Natural killer cell (primary cell): ENCODE measurements at regions of chr1 and their contacts with region 1.

Region 1: DNA sequence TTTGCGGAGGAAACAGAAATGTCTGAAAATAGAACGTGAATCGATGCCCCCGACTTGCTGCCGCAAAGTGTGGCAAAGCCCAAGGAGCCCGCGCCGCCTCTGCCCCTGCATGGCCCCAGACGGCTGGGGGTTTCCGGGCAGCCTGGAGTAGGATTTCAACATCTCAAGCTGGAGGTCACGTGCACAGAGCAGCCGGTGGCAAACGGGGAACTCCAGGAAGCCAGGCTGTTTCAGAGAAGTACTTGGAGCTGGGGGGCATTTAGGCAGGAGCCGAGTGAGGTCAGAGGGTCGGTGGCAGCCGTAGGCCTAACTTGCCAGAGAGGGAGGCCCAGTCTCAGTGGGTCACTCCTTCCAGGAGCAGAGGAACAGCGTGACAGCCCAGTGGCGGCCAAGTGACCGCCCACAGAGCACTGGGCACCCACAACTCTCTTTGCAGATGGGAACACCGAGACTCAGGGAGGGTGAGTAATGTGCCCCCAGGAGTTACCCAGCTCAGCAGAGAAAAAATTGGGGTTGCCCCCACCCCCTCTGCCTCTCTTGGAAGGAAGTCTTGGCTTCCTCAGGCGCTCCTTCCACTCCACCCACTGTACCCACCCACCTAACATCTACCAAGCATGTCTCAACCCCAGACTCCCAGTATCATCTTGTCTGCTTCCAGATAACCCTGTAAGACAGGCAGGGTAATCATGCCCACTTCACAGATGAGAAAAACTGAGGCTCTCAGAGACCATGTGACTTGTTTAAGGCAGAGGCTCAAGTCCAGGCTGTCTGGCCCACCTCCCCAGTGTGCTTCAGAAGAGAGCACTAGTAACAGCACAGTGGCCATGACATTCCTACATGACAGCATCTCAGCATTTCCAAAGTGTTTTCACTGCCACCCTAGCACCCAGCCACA is 179.4 kb downstream of the HIVEP3 start:
- DNase-seq: peak; percentile 79 to 90
- ATAC-seq: peak; percentile 83 to 92 (median 89)
- H3K4me3 ChIP-seq: peak overlapping the region; percentile 2
- H3K4me3 Mint-ChIP-seq: peak overlapping the region; percentile 78
- H3K27ac ChIP-seq: peak overlapping the region; percentile 65
- H3K27ac Mint-ChIP-seq: peak overlapping the region; percentile 92 to 97
- H3K4me1 ChIP-seq: peaks cover 47% of the 10 kb centered on the region
- H3K4me1 Mint-ChIP-seq: peaks cover 54 to 75% of the 10 kb centered on the region in 2 donors
- H3K27me3 ChIP-seq: no peaks in the 10 kb centered on the region
- H3K27me3 Mint-ChIP-seq: no peaks in the 10 kb centered on the region
- CTCF ChIP-seq: no peak

Region 2: DNA sequence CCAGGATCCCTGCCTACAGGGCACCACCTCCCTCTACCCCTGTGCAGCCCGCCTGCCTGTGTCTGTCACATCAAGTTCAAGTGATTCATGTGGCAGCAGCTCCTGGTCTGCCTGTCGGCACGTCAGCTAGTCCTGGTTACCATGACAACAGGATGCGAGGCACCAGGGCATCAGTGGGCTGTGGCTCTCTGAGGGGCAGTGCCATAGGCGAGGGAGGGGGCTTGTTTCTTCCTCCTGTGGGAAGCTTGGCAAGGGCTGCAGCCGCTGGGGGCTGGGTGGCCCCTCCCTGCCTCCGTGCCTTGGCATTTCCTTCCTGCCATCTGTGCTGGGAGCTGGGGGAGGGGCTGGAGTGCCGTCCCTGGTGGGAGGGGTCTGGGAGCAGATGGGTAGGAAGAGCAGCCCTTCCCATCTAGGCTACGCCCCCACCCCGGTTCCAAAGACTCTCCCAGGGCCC is 335.0 kb before region 1 on chr1:
- intact Hi-C with region 1: loop called (anchors 5 kb)
- DNase-seq: peak in 1 of 2 donors; percentile 39
- ATAC-seq: peak; percentile 55 to 88 (median 85)
- H3K4me3 ChIP-seq: no peak overlapping the region
- H3K4me3 Mint-ChIP-seq: no peak overlapping the region
- H3K27ac ChIP-seq: no peak overlapping the region
- H3K27ac Mint-ChIP-seq: peak overlapping the region in 1 of 2 donors; percentile 74
- H3K4me1 ChIP-seq: peaks cover 7% of the 10 kb centered on the region
- H3K4me1 Mint-ChIP-seq: no peaks in the 10 kb centered on the region
- H3K27me3 ChIP-seq: peaks cover 10% of the 10 kb centered on the region
- H3K27me3 Mint-ChIP-seq: peaks cover 23 to 29% of the 10 kb centered on the region in 2 donors
- CTCF ChIP-seq: no peak

Region 3: DNA sequence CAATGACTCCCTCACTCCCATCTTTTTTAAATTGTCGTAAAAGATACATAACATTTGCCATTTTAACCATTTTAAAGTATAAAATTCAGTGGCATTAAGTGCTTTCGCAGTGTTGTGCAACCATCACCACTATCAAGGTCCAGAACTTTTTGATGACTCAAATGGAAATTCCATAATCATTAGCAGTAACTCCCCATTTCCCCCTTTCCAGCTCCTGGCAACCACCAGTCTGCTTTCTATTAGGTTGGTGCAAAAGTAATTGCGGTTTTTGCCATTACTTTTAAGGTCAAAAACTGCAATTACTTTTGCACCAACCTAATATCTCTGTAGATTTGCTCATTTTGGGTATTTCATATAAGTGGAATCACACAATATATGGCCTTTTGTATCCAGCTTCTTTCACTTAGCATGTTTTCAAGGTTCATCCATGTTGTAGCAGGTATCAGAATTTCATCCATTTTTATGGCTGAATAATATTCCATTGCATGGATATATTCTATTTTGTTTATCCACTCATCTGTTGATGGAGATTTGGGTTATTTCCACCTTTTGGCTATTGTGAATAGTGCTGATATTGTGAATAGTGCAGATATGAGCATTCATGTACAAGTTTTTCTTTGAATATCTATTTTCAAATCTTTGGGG is 19.7 kb after region 1 on chr1:
- intact Hi-C with region 1: no loop called
- DNase-seq: no peak
- ATAC-seq: no peak
- H3K4me3 ChIP-seq: no peak overlapping the region
- H3K4me3 Mint-ChIP-seq: no peak overlapping the region
- H3K27ac ChIP-seq: no peak overlapping the region
- H3K27ac Mint-ChIP-seq: no peak overlapping the region
- H3K4me1 ChIP-seq: peaks cover 10% of the 10 kb centered on the region
- H3K4me1 Mint-ChIP-seq: peaks cover 12 to 25% of the 10 kb centered on the region in 2 donors
- H3K27me3 ChIP-seq: no peaks in the 10 kb centered on the region
- H3K27me3 Mint-ChIP-seq: peaks cover 0 to 2% of the 10 kb centered on the region in 2 donors
- CTCF ChIP-seq: no peak

Region 4: DNA sequence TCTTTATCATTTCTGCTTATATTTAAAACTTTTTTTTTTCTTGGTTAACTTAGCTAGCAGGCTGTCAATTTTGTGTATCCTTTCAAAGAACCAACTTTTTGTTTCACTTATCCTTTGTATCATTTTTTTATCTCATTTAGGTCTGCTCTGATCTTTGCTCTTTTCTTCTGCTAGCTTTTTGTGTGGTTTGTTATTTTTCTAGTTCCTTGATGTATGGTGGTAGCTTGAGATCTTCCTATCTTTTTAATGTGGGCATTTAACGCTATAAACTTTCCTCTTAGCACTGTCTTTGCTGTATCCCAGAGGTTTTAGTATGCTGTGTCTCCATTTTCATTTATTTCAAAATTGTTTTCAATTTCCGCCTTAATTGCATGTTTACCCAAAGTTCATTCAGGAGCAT is 559.2 kb after region 1 on chr1:
- intact Hi-C with region 1: no loop called
- DNase-seq: peak in 1 of 2 donors; percentile 29
- ATAC-seq: no peak
- H3K4me3 ChIP-seq: no peak overlapping the region
- H3K4me3 Mint-ChIP-seq: no peak overlapping the region
- H3K27ac ChIP-seq: no peak overlapping the region
- H3K27ac Mint-ChIP-seq: no peak overlapping the region
- H3K4me1 ChIP-seq: no peaks in the 10 kb centered on the region
- H3K4me1 Mint-ChIP-seq: peaks cover 35 to 56% of the 10 kb centered on the region in 2 donors
- H3K27me3 ChIP-seq: no peaks in the 10 kb centered on the region
- H3K27me3 Mint-ChIP-seq: no peaks in the 10 kb centered on the region
- CTCF ChIP-seq: no peak